ENCODE measurements at regions of chr3 and their contacts with region 1.

Region 1: DNA sequence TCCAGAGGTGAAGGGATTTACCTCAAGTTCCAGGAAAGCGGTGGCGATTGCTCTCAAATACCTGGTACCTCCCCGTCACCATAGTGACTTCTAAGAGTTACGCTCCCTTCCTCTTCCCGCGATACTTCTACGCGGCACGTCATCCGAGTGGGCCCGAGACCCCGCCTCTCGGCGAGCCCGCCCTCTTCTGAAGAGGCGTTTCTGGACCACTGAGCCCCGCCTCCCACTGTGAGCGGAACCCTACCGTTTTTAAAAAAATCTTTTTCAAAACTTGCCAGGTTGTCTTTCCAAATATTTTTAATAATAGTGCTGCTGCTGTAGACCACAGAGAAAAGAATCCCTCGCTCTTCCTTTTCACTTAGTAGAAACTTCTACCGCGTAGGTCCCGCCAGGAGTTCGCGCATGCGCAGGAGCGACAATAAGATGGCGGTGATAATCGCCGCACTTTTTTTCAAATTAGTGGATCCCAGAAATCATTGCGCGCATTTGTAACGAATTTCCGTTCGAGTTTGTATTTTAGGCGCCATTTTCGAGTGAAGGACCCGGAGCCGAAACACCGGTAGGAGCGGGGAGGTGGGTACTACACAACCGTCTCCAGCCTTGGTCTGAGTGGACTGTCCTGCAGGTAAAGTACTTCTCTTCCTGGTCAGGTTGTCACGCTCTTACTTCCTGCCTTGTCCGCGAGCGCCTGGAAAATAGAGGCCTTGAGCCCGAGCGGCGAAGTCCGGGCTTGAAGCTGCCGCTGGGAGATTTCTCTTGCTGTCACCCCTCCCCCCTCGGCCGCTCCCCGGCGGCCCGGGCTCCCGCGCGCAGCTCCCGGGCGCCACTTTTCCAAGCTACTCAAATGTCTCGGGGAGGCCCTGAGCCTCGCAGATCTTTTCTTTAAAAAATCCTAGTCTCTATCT is at the starts of genes IFT80 and SMC4:
- DNase-seq: peak; percentile 98
- ATAC-seq: peak; percentile 93
- H3K4me3 Mint-ChIP-seq: peak within 1 kb of the TSS; percentile 91
- H3K27ac Mint-ChIP-seq: peak within 1 kb of the TSS; percentile 96
- H3K4me1 Mint-ChIP-seq: peaks cover 35% of the 10 kb centered on the region
- H3K27me3 Mint-ChIP-seq: peaks cover 7% of the 10 kb centered on the region
- total RNA-seq, gene IFT80: 15.0 to 18.1 TPM
- total RNA-seq, gene SMC4: 176 to 216 TPM

Region 2: DNA sequence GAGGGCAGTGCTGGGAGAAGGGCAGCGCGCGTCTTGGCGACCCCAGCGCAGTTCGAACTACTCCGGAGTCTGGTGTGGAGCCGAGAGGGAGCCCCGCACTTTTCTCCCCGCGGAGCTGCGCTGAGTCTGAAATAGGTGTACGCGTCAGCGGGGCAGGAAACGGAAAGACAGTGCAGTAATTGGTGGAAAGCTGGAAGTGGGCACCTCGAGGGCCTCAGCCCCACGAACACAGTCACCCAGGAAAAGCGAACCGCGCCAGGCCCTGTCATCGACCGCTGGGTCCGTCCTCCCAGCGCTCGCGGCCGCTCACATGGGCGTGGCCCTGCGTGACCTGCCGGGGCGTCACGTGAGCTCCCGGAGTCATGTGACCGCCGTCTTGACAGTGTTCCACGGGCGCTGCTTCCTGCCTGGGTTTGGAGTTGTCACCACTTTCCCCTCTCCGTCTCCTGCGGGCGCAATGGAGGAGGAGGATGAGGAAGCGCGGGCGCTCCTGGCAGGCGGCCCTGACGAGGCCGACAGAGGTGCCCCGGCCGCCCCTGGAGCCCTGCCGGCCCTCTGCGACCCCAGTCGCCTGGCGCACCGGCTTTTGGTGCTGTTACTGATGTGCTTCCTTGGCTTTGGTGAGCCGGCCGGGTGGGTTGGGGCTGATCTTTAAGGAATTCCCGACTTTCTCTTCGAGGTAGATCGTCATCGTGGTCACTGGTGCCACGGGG is 1597.5 kb before region 1 on chr3 and contains the start of gene MFSD1:
- CTCF ChIA-PET with region 1: no interaction called
- POLR2A ChIA-PET with region 1: no interaction called
- intact Hi-C with region 1: loop called in 1 of 2 experiments (anchors 5 kb)
- DNase-seq: peak; percentile 94
- ATAC-seq: peak; percentile 92
- H3K4me3 Mint-ChIP-seq: peak within 1 kb of the TSS; percentile 81
- H3K27ac Mint-ChIP-seq: peak within 1 kb of the TSS; percentile 87
- H3K4me1 Mint-ChIP-seq: peaks cover 22% of the 10 kb centered on the region
- H3K27me3 Mint-ChIP-seq: no peaks in the 10 kb centered on the region
- total RNA-seq, gene MFSD1: 6.9 to 13.1 TPM

Region 3: GRCh38 chr3:160225176-160226025 is 174.0 kb before region 1 on chr3 and contains the start of gene C3orf80:
- CTCF ChIA-PET with region 1: interaction called, 3 read pairs
- POLR2A ChIA-PET with region 1: interaction called, 4 read pairs
- intact Hi-C with region 1: loop called in 1 of 2 experiments (anchors 1 kb)
- DNase-seq: peak; percentile 76
- ATAC-seq: peak; percentile 91
- H3K4me3 Mint-ChIP-seq: peak within 1 kb of the TSS; percentile 62
- H3K27ac Mint-ChIP-seq: no peak within 1 kb of the TSS
- H3K4me1 Mint-ChIP-seq: peaks cover 10% of the 10 kb centered on the region
- H3K27me3 Mint-ChIP-seq: peaks cover 41% of the 10 kb centered on the region
- total RNA-seq, gene C3orf80: 0.09 TPM in 1 of 2 experiments, not detected in the other

Region 4: GRCh38 chr3:160449636-160450598 is 50.5 kb after region 1 on chr3 and contains the start of gene TRIM59:
- CTCF ChIA-PET with region 1: no interaction called
- POLR2A ChIA-PET with region 1: interaction called, 12 read pairs
- intact Hi-C with region 1: loop called (anchors 1 kb)
- DNase-seq: peak; percentile 99
- ATAC-seq: peak; percentile 95
- H3K4me3 Mint-ChIP-seq: peak within 1 kb of the TSS; percentile 97
- H3K27ac Mint-ChIP-seq: peak within 1 kb of the TSS; percentile 96
- H3K4me1 Mint-ChIP-seq: peaks cover 20% of the 10 kb centered on the region
- H3K27me3 Mint-ChIP-seq: no peaks in the 10 kb centered on the region
- total RNA-seq, gene TRIM59: 32.5 to 42.2 TPM

Region 5: GRCh38 chr3:160565442-160566403 is 166.3 kb after region 1 on chr3 and contains the start of gene KPNA4:
- CTCF ChIA-PET with region 1: no interaction called
- POLR2A ChIA-PET with region 1: no interaction called
- intact Hi-C with region 1: loop called (anchors 1 to 2 kb)
- DNase-seq: peak; percentile 98
- ATAC-seq: peak; percentile 93
- H3K4me3 Mint-ChIP-seq: peak within 1 kb of the TSS; percentile 95
- H3K27ac Mint-ChIP-seq: peak within 1 kb of the TSS; percentile 96
- H3K4me1 Mint-ChIP-seq: peaks cover 43% of the 10 kb centered on the region
- H3K27me3 Mint-ChIP-seq: no peaks in the 10 kb centered on the region
- total RNA-seq, gene KPNA4: 57.0 to 68.5 TPM

Region 6: DNA sequence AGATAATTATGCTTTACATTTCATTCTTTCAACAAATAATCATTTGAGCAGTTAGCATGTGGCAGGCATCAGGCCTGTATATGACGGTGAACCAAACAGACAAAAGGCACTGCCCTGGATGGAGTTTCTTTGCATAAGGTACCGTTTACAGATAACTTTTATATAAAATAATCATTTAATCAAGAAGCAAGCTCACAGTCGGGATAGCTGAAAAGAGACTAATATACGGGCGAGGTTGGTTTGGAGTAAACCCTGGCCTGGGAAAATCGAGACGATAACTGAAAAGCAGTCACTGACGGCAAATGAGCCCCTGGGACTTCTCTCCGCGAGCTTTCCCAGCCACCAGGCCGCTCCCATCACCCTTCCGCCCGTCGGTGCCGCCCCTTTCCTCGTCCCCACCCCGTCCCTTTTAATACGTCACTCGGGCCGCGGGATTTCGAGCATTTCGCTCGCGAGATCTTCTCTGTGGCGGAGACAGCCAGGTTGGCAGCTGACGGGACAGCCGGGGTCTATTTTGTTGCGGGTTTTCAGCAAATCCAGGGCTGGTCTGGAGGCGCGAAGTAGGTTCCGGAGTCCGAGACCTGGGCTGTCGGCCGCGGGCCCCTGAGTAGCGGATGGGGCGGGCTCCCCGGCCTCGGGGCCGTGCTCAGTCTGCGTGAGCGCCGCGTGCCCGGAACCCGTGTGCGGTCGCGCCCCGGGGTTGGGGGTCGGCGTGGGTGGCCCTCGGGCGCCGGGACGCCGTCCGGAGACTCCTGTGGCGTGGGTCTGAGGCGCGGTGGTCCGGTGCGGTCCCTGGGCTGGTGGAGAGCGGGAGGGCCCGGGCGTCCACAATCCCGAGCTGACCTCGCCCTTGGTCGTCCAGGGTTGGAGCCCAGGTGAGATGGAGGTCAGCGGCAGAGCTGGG is 821.7 kb after region 1 on chr3 and contains the start of gene NMD3:
- CTCF ChIA-PET with region 1: no interaction called
- POLR2A ChIA-PET with region 1: no interaction called
- intact Hi-C with region 1: loop called in 1 of 2 experiments (anchors 1 kb)
- DNase-seq: peak; percentile 97
- ATAC-seq: peak; percentile 98
- H3K4me3 Mint-ChIP-seq: peak within 1 kb of the TSS; percentile 86
- H3K27ac Mint-ChIP-seq: peak within 1 kb of the TSS; percentile 88
- H3K4me1 Mint-ChIP-seq: peaks cover 26% of the 10 kb centered on the region
- H3K27me3 Mint-ChIP-seq: peaks cover 4% of the 10 kb centered on the region
- total RNA-seq, gene NMD3: 49.6 to 65.5 TPM

Measured in activated CD4-positive, alpha-beta T cell treated with anti-CD3 and anti-CD28 coated beads for 36 hours (primary cell).